Activated T-helper 2 cell treated with anti-CD3 and anti-CD28 coated beads, Interferon-gamma antibody, Interleukin-2, Interleukin-4, amounts not matched to agents 10 μg/mL and 5 μg/mL and 100 μg/mL, durations not matched to agents 14 hours and 24 hours and 36 hours (primary cell): ENCODE measurements at regions of chr10 and their contacts with region 1.

Region 1: DNA sequence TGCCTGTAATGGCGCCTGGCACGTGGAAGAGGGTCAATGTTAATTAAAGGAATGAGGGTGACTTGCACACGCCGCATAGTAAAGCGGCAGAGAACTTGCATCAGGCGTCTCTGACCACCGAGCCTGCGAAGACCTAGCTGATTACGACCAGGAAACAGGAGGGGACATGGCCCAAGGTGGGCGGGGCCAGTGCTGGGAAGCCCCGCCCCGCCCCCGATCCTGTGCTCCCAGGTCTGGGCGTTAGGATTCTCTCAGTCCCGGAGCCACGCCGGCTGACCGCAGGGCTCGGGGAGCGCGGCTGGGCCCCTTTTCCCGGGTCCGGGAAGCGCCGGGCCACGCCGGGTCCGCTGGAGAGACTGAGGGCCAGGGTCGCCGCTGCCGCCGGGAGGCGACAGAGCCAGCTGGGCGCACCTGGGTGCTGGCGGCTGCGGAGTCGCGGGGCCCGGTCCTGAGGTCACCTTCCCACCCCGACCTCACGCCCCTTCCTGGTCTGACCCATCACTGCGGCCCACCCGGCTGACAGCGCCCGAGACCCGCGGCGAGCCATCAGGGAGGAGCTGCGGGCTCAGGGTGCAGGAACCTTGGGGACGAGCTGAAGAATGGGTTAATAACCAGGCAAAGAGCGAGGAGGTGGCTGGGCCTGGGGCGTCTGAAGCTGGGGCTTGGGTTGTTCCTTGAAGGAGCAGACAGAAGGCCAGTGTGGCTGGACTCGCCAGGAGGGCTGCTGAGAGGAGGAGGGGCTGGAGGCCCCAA is 23.0 kb upstream of the GRID1 start:
- DNase-seq: no peak
- H3K4me3 Mint-ChIP-seq: peak overlapping the region; percentile 69
- H3K27ac Mint-ChIP-seq: no peak overlapping the region
- H3K4me1 Mint-ChIP-seq: peaks cover 11% of the 10 kb centered on the region
- H3K27me3 Mint-ChIP-seq: peaks cover 55% of the 10 kb centered on the region

Region 2: GRCh38 chr10:86411281-86411841 is 21.7 kb after region 1 on chr10:
- intact Hi-C with region 1: no loop called
- DNase-seq: no peak
- H3K4me3 Mint-ChIP-seq: peak overlapping the region; percentile 61
- H3K27ac Mint-ChIP-seq: peak overlapping the region; percentile 94
- H3K4me1 Mint-ChIP-seq: peaks cover 48% of the 10 kb centered on the region
- H3K27me3 Mint-ChIP-seq: no peaks in the 10 kb centered on the region

Region 3: DNA sequence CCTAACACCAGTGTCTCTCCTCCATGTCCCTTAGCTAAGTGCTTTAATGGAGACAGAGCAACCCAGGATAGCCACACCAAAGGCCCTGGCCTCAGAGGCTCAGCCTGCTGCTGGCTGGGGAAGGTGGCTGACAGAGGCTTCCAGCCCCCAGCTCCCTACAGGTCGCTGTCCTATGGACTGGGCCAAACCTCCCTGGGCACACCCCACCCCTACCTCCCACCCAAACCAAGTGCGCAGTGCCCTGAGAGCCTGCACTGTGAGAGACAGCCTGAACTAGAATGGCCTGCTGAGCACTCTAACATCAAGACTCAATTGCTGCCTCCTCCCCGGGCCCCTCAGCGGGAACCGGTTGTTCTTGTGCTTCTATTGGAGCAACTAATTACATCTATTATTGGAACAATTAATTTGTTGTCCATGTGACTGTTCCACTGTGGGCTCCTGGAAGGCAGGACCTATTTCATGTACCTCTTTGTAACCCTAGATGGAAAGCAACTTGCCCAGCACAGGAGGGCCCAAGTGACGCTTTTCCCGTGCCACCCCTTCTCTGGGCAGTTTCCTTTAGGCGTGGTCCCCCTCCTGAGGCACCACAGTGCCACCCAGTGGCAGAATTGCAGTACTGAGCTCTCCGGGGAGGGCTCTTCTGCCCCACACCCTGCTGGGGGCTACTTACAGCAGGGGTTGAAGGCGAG is 195.6 kb after region 1 on chr10:
- intact Hi-C with region 1: loop called (anchors 2 kb)
- DNase-seq: peak; percentile 67
- H3K4me3 Mint-ChIP-seq: no peak overlapping the region
- H3K27ac Mint-ChIP-seq: no peak overlapping the region
- H3K4me1 Mint-ChIP-seq: no peaks in the 10 kb centered on the region
- H3K27me3 Mint-ChIP-seq: no peaks in the 10 kb centered on the region